ENCODE measurements at regions of chr1 and their contacts with region 1.

Region 1: DNA sequence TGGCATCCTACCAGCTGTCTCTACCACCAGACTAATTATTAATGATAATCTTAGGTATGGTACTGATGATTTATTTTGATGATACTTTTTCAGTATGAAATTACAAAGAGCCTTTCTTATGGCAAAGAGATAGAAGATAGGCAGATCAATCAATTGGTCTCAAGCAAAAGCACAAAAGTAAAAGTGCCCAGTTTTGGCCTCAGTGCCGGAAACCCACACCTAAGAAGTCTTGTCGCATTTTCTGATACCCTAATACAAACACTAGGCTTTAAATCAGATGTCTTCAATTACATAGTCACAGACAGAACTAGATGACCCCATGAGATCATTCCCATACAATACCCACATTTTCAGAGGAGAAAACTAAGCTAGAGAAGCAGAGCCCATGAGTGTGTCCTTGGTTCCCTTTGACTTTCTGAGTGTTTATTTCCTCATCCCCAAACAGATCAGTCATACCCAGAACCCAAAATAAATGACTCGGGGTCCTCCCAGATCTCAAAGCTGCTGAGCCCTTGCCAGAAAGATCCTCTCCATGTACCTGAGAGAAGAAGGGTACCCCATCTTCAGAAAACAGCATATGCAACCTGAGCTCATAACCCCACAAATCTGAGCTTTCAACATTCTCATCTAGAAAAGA is 7.7 kb downstream of the ITPKB start:
- DNase-seq: peak in 1 of 5 donors; percentile 34
- H3K4me3 ChIP-seq: peak overlapping the region; percentile 65
- H3K4me3 Mint-ChIP-seq: peak overlapping the region; percentile 88 to 100 (median 96)
- H3K27ac ChIP-seq: no peak overlapping the region
- H3K27ac Mint-ChIP-seq: peak overlapping the region; percentile 89 to 100 (median 95)
- H3K4me1 ChIP-seq: peaks cover 65% of the 10 kb centered on the region
- H3K4me1 Mint-ChIP-seq: peaks cover 86 to 98% (median 96%) of the 10 kb centered on the region in 3 donors
- H3K27me3 ChIP-seq: no peaks in the 10 kb centered on the region
- H3K27me3 Mint-ChIP-seq: no peaks in the 10 kb centered on the region

Region 2: DNA sequence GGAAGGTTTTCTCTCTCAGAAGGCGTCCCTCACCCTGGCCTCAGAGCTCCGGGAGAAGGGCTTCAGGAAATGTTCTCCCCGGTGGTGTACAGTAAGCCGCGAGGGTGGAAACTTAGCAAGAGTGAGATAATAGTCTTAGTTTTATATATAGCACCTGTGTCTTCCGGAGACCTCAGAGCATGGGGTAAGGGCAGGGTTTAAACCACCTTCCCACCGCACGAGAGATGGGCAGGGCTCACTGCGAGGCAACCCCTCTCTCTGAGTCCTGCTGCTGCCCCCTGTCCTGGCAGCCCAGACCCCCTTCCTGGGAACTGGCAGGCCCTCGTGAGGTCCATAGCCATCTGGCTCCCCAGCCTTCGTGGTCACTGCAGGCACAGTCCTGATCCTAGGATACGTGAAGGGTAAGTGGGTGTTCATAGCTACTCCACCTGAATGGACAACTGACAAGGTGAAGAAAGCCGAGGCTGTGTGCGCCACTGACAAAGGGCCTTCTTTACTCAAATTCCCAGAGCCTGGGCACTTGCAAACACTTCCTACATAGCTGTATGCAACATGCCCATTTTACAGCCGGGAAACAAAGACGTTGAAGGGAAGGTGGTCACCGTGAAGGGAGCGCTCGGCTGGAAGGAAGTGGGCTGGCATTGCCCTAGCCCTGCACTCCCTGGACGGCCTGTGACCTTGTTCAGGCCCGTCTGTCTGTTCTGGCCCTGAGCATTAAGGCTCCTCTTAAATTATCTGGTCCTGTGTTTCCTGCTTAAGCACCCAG is 19.2 kb before region 1 on chr1:
- CTCF ChIA-PET with region 1: interaction called, 18 read pairs
- POLR2A ChIA-PET with region 1: interaction called, 10 read pairs
- DNase-seq: peak; percentile 44 to 83 (median 67)
- H3K4me3 ChIP-seq: peak overlapping the region; percentile 52
- H3K4me3 Mint-ChIP-seq: peak overlapping the region; percentile 66 to 92 (median 77)
- H3K27ac ChIP-seq: peak overlapping the region; percentile 32
- H3K27ac Mint-ChIP-seq: peak overlapping the region; percentile 86 to 95 (median 90)
- H3K4me1 ChIP-seq: peaks cover 88% of the 10 kb centered on the region
- H3K4me1 Mint-ChIP-seq: peaks cover 93 to 99% (median 99%) of the 10 kb centered on the region in 3 donors
- H3K27me3 ChIP-seq: no peaks in the 10 kb centered on the region
- H3K27me3 Mint-ChIP-seq: peaks cover 0 to 7% of the 10 kb centered on the region in 2 donors

Region 3: DNA sequence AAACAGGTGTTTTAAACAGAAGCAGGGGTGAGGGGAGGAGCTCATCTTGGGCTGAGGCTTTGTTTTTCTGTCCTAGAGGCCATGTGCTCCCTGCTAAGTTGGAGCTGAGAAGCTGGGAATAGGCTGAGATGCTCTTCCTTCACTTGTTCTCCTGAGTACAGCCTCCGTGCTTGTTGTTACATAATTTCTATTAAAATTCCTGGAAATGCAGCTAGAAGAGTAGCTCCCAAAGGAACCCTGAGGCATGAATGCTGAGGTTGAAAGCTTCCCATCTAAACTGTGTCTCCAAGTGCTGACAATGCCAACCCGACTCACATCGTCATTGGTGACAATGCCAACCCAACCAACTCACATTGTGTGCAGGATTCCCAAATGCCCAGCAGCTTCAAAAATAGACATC is 20.3 kb after region 1 on chr1:
- CTCF ChIA-PET with region 1: no interaction called
- POLR2A ChIA-PET with region 1: no interaction called
- DNase-seq: no peak
- H3K4me3 ChIP-seq: no peak overlapping the region
- H3K4me3 Mint-ChIP-seq: no peak overlapping the region
- H3K27ac ChIP-seq: no peak overlapping the region
- H3K27ac Mint-ChIP-seq: peak overlapping the region in 1 of 8 donors; percentile 14
- H3K4me1 ChIP-seq: peaks cover 19% of the 10 kb centered on the region
- H3K4me1 Mint-ChIP-seq: peaks cover 14 to 19% (median 14%) of the 10 kb centered on the region in 3 donors
- H3K27me3 ChIP-seq: no peaks in the 10 kb centered on the region
- H3K27me3 Mint-ChIP-seq: peaks cover 0 to 6% of the 10 kb centered on the region in 2 donors